AG04449 (cell line): ENCODE measurements at regions of chr21 and their contacts with region 1.

Region 1: DNA sequence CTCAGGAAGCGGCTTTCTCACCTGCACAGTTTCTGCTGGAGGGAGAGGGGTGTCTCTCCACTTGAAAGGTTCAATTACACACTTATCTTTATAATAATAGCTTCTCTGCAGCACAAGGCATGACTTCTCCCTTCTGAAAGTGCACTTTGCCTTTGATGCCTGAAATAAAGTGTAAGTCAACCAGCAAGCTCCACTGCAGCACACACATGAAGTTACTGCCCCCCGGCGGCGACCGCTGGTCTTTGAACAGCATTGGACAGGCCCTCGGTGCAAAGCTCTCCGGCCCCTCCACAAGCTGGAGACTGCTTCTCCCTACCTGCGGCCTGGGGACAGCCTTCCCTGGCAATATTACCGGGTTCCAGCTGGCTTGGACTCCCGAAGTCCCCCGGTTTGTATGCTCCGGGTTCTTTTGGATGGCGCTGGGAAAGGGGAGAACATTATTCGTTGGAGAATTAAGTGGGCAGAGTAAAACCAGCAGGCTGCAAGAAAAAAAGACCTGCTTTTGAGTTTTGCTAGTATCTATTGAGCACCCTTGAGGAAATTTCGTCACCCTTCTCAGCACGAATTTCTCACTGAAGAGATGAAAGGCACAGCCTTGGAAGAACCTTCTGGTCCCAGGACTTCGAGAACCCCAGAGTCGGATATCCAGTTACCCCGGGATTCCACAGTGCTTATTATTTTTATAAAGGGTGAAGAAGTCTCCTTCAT is 11.8 kb downstream of the RCAN1 start:
- DNase-seq: no peak
- H3K4me3 ChIP-seq: no peak overlapping the region
- CTCF ChIP-seq: peak; percentile 89

Region 2: DNA sequence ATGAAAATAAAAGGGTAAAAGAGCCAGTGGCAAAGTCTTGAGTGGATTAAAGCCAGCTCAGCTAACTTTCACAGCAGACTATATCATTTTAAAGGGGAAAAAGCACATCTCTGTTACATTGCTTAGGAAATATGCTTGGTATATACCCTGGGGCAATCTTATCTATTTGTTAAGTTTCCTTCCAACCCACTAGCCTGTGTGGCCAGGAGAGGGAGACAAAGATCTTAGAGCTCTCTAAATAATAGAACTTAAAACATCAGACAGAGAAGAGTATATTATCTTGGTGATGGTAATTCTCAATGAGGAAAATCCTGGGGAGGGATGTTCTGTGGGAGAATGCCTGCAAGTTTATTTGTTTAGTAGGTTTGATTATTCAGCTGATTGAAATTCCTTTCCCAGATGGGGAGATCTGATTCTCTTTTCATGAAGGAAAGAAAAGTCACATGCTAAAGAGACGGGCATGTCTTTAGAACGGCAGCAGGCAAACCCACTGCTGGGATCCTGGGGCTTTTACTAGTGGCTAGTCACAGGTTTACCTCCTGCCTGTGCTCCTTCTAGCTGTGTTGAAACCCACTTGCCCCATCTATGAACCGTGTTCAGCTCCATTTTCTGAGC is 235.7 kb before region 1 on chr21:
- CTCF ChIA-PET with region 1: interaction called, 24 read pairs
- POLR2A ChIA-PET with region 1: no interaction called
- DNase-seq: peak; percentile 60
- H3K4me3 ChIP-seq: no peak overlapping the region
- CTCF ChIP-seq: peak; percentile 66

Region 3: DNA sequence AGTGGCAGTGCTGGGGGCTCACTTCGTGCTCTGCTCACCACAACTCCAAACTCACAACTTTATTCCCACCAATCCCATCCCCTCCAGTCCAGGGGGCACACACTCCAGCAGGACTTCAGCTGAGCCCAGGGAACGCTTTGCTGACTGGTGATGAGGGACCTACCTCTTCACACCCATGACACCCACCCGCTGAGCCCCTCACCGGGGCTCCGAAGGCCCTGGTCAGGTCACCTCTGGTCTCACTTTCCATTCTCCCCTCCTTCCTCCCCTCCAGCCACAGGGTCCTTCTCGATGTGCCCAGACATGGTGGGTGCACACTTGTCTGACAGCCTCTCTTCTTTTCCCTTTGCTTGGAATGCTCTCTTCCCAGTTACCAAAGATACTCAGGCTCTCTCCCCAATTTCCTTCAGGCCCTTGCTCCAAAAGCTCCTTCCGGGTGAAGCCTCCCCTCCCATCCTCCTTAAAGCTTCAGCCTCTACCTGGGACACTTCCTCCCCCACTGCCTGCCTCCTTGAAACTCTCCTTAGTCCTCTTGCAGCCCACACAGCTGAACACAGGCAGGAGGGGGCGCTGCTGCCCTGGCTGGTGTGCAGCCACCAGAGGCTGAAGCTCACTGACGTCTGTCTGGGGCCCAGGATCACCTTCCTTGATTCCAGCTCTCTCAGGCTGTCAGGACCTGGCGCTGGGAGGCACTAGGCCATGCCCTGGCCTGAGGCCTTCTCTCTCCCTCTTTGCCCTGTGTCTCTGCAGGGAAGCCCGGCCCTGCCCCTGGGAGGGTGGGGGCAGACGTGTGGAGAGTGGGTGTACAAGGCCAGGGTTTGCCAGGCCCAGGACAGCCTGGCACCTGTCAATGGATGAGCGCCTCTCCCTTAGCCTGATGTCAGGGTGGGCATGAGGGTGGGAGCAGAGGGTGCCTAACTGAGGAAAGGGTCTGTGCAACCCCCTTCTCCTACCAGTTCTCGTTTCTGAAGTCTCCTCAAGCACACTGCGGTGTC is 92.7 kb before region 1 on chr21:
- CTCF ChIA-PET with region 1: interaction called, 336 read pairs
- POLR2A ChIA-PET with region 1: interaction called, 10 read pairs
- DNase-seq: no peak
- H3K4me3 ChIP-seq: no peak overlapping the region
- CTCF ChIP-seq: peak; percentile 98

Region 4: GRCh38 chr21:34576041-34576511 is 27.1 kb before region 1 on chr21:
- CTCF ChIA-PET with region 1: interaction called, 44 read pairs
- POLR2A ChIA-PET with region 1: interaction called, 3 read pairs
- DNase-seq: no peak
- H3K4me3 ChIP-seq: no peak overlapping the region
- CTCF ChIP-seq: no peak

Region 5: GRCh38 chr21:34592120-34592955 is 10.8 kb before region 1 on chr21:
- CTCF ChIA-PET with region 1: interaction called, 52 read pairs
- POLR2A ChIA-PET with region 1: no interaction called
- DNase-seq: no peak
- H3K4me3 ChIP-seq: no peak overlapping the region
- CTCF ChIP-seq: no peak

Region 6: GRCh38 chr21:34625030-34625593 is 22.0 kb after region 1 on chr21:
- CTCF ChIA-PET with region 1: interaction called, 50 read pairs
- POLR2A ChIA-PET with region 1: no interaction called
- DNase-seq: no peak
- H3K4me3 ChIP-seq: no peak overlapping the region
- CTCF ChIP-seq: no peak